GM18951 (cell line): ENCODE measurements at regions of chr18 and their contacts with region 1.

Region 1: DNA sequence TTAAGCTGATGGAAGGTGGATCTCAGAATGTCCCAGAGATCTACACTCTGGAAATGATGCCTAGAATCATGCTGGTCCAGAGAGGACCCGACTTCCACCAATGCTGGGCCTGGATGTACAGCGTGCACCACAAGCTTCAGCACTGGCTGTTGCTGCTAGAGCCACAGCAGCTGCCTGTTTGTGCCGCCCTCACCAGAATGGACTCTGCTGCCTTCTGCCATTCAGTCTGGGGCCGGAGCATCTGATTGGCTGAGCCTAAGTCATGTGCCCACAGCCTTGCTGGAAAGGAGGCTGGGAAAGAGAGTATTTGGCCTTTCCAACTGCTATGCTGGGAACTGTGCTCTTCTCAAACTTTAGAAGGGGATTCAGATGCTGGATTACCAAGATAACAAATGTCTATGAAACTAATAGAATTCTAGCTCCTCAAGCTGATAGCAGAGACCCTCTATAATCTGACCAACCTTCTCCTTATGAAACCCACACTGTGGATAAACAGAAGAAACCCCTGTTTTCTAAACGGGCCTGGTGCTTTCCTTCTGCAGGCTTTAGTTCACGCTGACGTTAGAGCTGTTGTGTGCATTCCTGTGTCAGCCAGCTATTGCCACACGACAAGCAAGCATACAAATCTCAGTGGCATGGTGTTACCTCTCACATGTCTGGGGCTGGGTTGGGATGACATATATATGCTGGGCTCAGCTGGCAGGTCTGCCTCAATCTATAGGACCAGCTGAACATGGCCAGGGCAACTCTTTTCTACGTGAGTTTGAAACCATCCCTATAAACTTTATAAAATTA is 4.1 kb upstream of the LOXHD1 start:
- POLR2A ChIP-seq: no peak

Region 2: DNA sequence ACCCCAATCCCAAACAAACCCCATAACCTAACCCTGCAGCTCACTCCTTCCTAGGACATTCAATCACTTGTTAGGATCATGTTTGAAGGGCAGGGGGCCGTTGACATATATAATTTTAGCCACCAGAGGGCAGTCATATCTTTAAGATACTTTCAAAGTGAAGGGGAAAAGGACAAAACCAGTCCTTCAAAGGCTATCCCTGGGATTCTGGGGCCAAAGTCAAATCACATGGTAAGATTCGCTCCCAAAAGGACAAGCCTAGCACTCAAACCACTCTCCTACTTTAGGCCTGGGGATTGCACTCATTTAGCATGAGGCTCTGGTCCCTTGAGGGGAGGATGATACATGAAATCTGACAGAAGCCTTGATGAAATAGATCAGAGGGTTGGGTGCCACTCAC is 512.3 kb before region 1 on chr18:
- in situ Hi-C with region 1: loop called (anchors 10 kb)
- POLR2A ChIP-seq: no peak

Region 3: GRCh38 chr18:46281185-46282176 is 379.7 kb before region 1 on chr18:
- in situ Hi-C with region 1: loop called (anchors 25 kb)
- POLR2A ChIP-seq: no peak